ENCODE measurements at regions of chr1 and their contacts with region 1.

Region 1: GRCh38 chr1:84506002-84506728 is at the starts of genes GNG5 and SPATA1:
- DNase-seq: peak; percentile 85
- ATAC-seq: peak; percentile 89
- H3K4me3 ChIP-seq: peak within 1 kb of the TSS; percentile 85
- H3K27ac ChIP-seq: peak within 1 kb of the TSS; percentile 91
- H3K4me1 ChIP-seq: no peaks in the 10 kb centered on the region
- H3K27me3 ChIP-seq: no peaks in the 10 kb centered on the region
- CTCF ChIP-seq: no peak
- EP300 ChIP-seq: peak in 1 of 2 experiments; percentile 24; a peak in 1 of 4 replicates
- POLR2A ChIP-seq: peak; percentile 85
- RAD21 ChIP-seq: no peak
- polyA plus RNA-seq, gene GNG5: 296 to 323 TPM
- polyA plus RNA-seq, gene SPATA1: 0.74 to 1.5 TPM

Region 2: GRCh38 chr1:83998498-83999315 is 507.5 kb before region 1 on chr1 and contains the start of gene TTLL7:
- CTCF ChIA-PET with region 1: no interaction called
- POLR2A ChIA-PET with region 1: no interaction called
- RAD21 ChIA-PET with region 1: no interaction called
- SMC1A ChIA-PET with region 1: no interaction called
- in situ Hi-C with region 1: no loop called
- intact Hi-C with region 1: no loop called
- DNase-seq: no peak
- ATAC-seq: peak; percentile 65
- H3K4me3 ChIP-seq: peak within 1 kb of the TSS; percentile 69
- H3K27ac ChIP-seq: no peak within 1 kb of the TSS
- H3K4me1 ChIP-seq: no peaks in the 10 kb centered on the region
- H3K27me3 ChIP-seq: no peaks in the 10 kb centered on the region; a peak in 2 of 4 replicates
- CTCF ChIP-seq: no peak
- EP300 ChIP-seq: no peak
- POLR2A ChIP-seq: peak; percentile 70
- RAD21 ChIP-seq: no peak
- polyA plus RNA-seq, gene TTLL7: 0.15 to 0.43 TPM

Region 3: GRCh38 chr1:84060781-84061180 is 445.4 kb before region 1 on chr1:
- CTCF ChIA-PET with region 1: no interaction called
- POLR2A ChIA-PET with region 1: no interaction called
- RAD21 ChIA-PET with region 1: no interaction called
- SMC1A ChIA-PET with region 1: no interaction called
- in situ Hi-C with region 1: no loop called
- intact Hi-C with region 1: no loop called
- DNase-seq: no peak
- ATAC-seq: no peak
- H3K4me3 ChIP-seq: no peak overlapping the region
- H3K27ac ChIP-seq: no peak overlapping the region
- H3K4me1 ChIP-seq: no peaks in the 10 kb centered on the region
- H3K27me3 ChIP-seq: no peaks in the 10 kb centered on the region
- CTCF ChIP-seq: no peak
- EP300 ChIP-seq: no peak
- POLR2A ChIP-seq: no peak
- RAD21 ChIP-seq: no peak

Region 4: GRCh38 chr1:84478876-84479868 is 27.0 kb before region 1 on chr1 and contains the start of gene RPF1:
- CTCF ChIA-PET with region 1: interaction called, 43 read pairs
- POLR2A ChIA-PET with region 1: interaction called, 27 read pairs
- RAD21 ChIA-PET with region 1: interaction called, 16 read pairs
- SMC1A ChIA-PET with region 1: interaction called, 61 read pairs
- in situ Hi-C with region 1: no loop called
- intact Hi-C with region 1: loop called (anchors 1 kb)
- DNase-seq: peak; percentile 49
- ATAC-seq: peak; percentile 96
- H3K4me3 ChIP-seq: peak within 1 kb of the TSS; percentile 87
- H3K27ac ChIP-seq: peak within 1 kb of the TSS; percentile 80
- H3K4me1 ChIP-seq: no peaks in the 10 kb centered on the region
- H3K27me3 ChIP-seq: no peaks in the 10 kb centered on the region
- CTCF ChIP-seq: no peak
- EP300 ChIP-seq: no peak; a peak in 1 of 4 replicates
- POLR2A ChIP-seq: peak; percentile 78
- RAD21 ChIP-seq: no peak
- polyA plus RNA-seq, gene RPF1: 45.0 to 45.5 TPM

Region 5: DNA sequence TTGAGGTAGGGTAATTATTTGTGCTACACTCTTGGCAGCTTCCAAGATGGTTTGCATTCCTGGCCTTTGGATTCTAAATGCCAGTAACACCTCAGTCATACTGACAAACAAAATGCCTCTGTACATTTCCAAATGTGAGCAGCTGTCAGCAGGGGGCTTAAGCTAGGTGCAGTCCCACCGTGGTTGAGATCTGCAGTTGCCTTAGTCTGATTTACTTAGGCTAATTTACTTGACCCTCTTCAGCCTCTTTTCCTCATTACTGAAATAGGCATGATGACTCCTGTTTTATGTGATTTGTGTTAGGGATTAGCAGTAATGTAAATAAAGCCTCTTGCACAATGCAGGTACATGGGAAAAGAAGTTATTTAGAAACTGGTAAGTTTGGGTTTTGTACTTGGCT is 13.4 kb before region 1 on chr1:
- CTCF ChIA-PET with region 1: interaction called, 4 read pairs
- POLR2A ChIA-PET with region 1: interaction called, 7 read pairs
- RAD21 ChIA-PET with region 1: interaction called, 6 read pairs
- SMC1A ChIA-PET with region 1: interaction called, 12 read pairs
- in situ Hi-C with region 1: no loop called
- intact Hi-C with region 1: loop called (anchors 2 kb)
- DNase-seq: no peak
- ATAC-seq: no peak
- H3K4me3 ChIP-seq: no peak overlapping the region
- H3K27ac ChIP-seq: no peak overlapping the region
- H3K4me1 ChIP-seq: no peaks in the 10 kb centered on the region; the same call in 1 of the 2 replicates
- H3K27me3 ChIP-seq: no peaks in the 10 kb centered on the region
- CTCF ChIP-seq: no peak
- EP300 ChIP-seq: no peak
- POLR2A ChIP-seq: no peak
- RAD21 ChIP-seq: no peak

Region 6: DNA sequence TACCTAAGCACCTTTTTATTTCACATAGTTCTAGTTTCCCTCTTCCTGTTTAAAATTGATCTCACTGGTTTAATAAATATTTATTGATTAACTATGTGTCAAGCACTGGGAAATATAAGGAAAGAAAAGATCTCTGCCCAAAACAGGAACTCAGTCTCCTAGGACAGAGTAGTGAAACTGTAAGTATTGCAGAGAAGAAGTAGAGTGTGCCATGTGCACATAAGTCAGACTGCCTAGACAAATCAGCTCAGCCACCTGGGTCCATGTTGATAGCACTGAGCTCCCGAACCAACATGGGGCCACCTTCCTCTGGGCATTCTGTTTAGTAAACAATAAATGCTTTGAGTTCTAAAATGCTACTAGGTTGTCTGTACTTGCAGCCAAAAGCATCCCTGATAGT is 193.9 kb after region 1 on chr1:
- CTCF ChIA-PET with region 1: no interaction called
- POLR2A ChIA-PET with region 1: no interaction called
- RAD21 ChIA-PET with region 1: no interaction called
- SMC1A ChIA-PET with region 1: no interaction called
- in situ Hi-C with region 1: no loop called
- intact Hi-C with region 1: no loop called
- DNase-seq: no peak
- ATAC-seq: peak; percentile 83
- H3K4me3 ChIP-seq: no peak overlapping the region
- H3K27ac ChIP-seq: no peak overlapping the region
- H3K4me1 ChIP-seq: peaks cover 4% of the 10 kb centered on the region; the same call in 1 of the 2 replicates
- H3K27me3 ChIP-seq: no peaks in the 10 kb centered on the region; a peak in 1 of 4 replicates
- CTCF ChIP-seq: no peak
- EP300 ChIP-seq: no peak
- POLR2A ChIP-seq: no peak
- RAD21 ChIP-seq: no peak

Measured in GM12878 (cell line).